ENCODE measurements at regions of chrX and their contacts with region 1.

Region 1: GRCh38 chrX:47523297-47523696 is 37.7 kb upstream of the ARAF start:
- DNase-seq: peak; percentile 81
- ATAC-seq: peak; percentile 97
- H3K4me3 ChIP-seq: peak overlapping the region; percentile 72
- H3K27ac ChIP-seq: no peak overlapping the region
- H3K4me1 ChIP-seq: peaks cover 3% of the 10 kb centered on the region; the same call in 1 of the 2 replicates
- H3K27me3 ChIP-seq: no peaks in the 10 kb centered on the region
- CTCF ChIP-seq: peak; percentile 70

Region 2: GRCh38 chrX:47410649-47411048 is 112.6 kb before region 1 on chrX:
- CTCF ChIA-PET with region 1: no interaction called
- POLR2A ChIA-PET with region 1: no interaction called
- intact Hi-C with region 1: no loop called
- DNase-seq: no peak
- ATAC-seq: no peak
- H3K4me3 ChIP-seq: no peak overlapping the region
- H3K27ac ChIP-seq: no peak overlapping the region
- H3K4me1 ChIP-seq: no peaks in the 10 kb centered on the region
- H3K27me3 ChIP-seq: no peaks in the 10 kb centered on the region
- CTCF ChIP-seq: no peak

Region 3: GRCh38 chrX:47482512-47483309 is 40.6 kb before region 1 on chrX and contains the start of gene ZNF41:
- CTCF ChIA-PET with region 1: interaction called, 3 read pairs
- POLR2A ChIA-PET with region 1: no interaction called
- intact Hi-C with region 1: loop called (anchors 5 kb)
- DNase-seq: peak; percentile 90
- ATAC-seq: peak; percentile 92
- H3K4me3 ChIP-seq: peak within 1 kb of the TSS; percentile 92
- H3K27ac ChIP-seq: peak within 1 kb of the TSS; percentile 86
- H3K4me1 ChIP-seq: peaks cover 25% of the 10 kb centered on the region
- H3K27me3 ChIP-seq: no peaks in the 10 kb centered on the region
- CTCF ChIP-seq: no peak
- total RNA-seq, gene ZNF41: 11.1 and 11.3 TPM in 2 replicates

Region 4: GRCh38 chrX:47497273-47497672 is 26.0 kb before region 1 on chrX:
- CTCF ChIA-PET with region 1: interaction called, 17 read pairs
- POLR2A ChIA-PET with region 1: no interaction called
- intact Hi-C with region 1: loop called (anchors 1 kb)
- DNase-seq: peak; percentile 62
- ATAC-seq: no peak
- H3K4me3 ChIP-seq: no peak overlapping the region
- H3K27ac ChIP-seq: peak overlapping the region; percentile 56; the same call in 1 of the 2 replicates
- H3K4me1 ChIP-seq: peaks cover 39% of the 10 kb centered on the region
- H3K27me3 ChIP-seq: no peaks in the 10 kb centered on the region
- CTCF ChIP-seq: peak; percentile 82

Region 5: DNA sequence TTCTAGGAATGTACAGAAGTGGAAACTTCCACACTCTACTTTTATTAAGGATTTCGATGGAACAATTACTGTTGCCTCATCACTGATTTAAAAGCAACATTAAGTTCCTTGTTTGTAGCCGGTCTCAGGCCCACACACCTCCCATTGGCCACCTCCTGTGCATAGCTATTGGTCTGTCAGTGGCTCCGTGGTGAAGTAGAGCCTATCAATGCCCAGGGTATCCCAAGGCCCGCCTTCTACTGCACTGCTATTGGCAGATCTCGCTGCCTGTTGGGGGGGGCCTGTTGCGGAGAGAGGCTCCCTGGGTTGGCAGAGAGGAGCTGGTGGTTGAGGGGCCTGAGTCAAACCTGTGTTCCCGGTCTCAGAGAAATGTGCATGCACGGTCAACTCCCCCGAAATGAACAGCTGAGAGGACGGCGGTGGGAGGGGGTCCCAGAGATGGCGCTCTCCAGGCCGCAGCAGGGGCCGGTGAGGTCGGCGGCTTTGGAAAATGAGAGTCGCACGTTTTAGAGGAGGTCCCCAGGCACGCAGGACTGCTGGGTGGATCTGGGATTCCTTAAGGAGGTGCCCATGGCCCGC is 32.8 kb after region 1 on chrX:
- CTCF ChIA-PET with region 1: no interaction called
- POLR2A ChIA-PET with region 1: no interaction called
- intact Hi-C with region 1: no loop called
- DNase-seq: peak; percentile 90
- ATAC-seq: peak; percentile 93
- H3K4me3 ChIP-seq: peak overlapping the region; percentile 68
- H3K27ac ChIP-seq: peak overlapping the region; percentile 40
- H3K4me1 ChIP-seq: peaks cover 13% of the 10 kb centered on the region
- H3K27me3 ChIP-seq: no peaks in the 10 kb centered on the region
- CTCF ChIP-seq: no peak

Region 6: GRCh38 chrX:47706575-47706974 is 183.3 kb after region 1 on chrX:
- CTCF ChIA-PET with region 1: no interaction called
- POLR2A ChIA-PET with region 1: no interaction called
- intact Hi-C with region 1: no loop called
- DNase-seq: no peak
- ATAC-seq: no peak
- H3K4me3 ChIP-seq: no peak overlapping the region
- H3K27ac ChIP-seq: no peak overlapping the region
- H3K4me1 ChIP-seq: no peaks in the 10 kb centered on the region
- H3K27me3 ChIP-seq: peaks cover 49% of the 10 kb centered on the region
- CTCF ChIP-seq: no peak

Measured in PC-3 (cell line).